ENCODE measurements at regions of chr1 and their contacts with region 1.

Region 1: GRCh38 chr1:197180252-197180878 is 33.9 kb upstream of the ASPM start:
- DNase-seq: peak; percentile 9
- CTCF ChIP-seq: peak; percentile 46

Region 2: GRCh38 chr1:197130677-197131304 is 49.6 kb before region 1 on chr1:
- CTCF ChIA-PET with region 1: interaction called, 12 read pairs
- POLR2A ChIA-PET with region 1: no interaction called
- DNase-seq: no peak
- CTCF ChIP-seq: no peak

Region 3: DNA sequence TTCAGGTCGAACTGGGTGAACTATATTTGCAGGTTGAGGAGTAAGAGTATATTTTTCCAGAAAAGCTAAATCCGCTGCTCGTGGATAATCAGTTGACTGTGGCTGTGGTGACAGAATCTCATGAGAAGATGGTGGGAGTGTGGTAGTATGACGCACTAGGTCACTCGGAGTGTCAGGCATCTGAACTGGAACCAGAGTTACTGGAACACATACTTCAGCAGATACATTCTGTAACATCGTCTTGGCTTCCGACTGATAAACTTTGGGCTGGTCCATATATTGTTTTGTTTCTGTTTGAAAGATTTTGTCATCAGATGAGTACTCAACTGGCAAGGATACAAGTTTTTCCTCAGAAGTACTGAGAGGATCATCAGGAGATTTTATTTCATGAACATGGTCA is 20.9 kb before region 1 on chr1:
- CTCF ChIA-PET with region 1: interaction called, 17 read pairs
- POLR2A ChIA-PET with region 1: no interaction called
- DNase-seq: no peak
- CTCF ChIP-seq: no peak

Region 4: GRCh38 chr1:197210426-197210825 is 30.1 kb after region 1 on chr1:
- CTCF ChIA-PET with region 1: no interaction called
- POLR2A ChIA-PET with region 1: no interaction called
- DNase-seq: no peak
- CTCF ChIP-seq: no peak

Region 5: GRCh38 chr1:197264936-197265567 is 84.7 kb after region 1 on chr1:
- CTCF ChIA-PET with region 1: no interaction called
- POLR2A ChIA-PET with region 1: no interaction called
- DNase-seq: no peak
- CTCF ChIP-seq: no peak

Region 6: GRCh38 chr1:197330213-197330612 is 149.8 kb after region 1 on chr1:
- CTCF ChIA-PET with region 1: interaction called, 14 read pairs
- POLR2A ChIA-PET with region 1: no interaction called
- DNase-seq: no peak
- CTCF ChIP-seq: no peak

Region 7: GRCh38 chr1:197336571-197336970 is 156.2 kb after region 1 on chr1:
- CTCF ChIA-PET with region 1: interaction called, 14 read pairs
- POLR2A ChIA-PET with region 1: no interaction called
- DNase-seq: no peak
- CTCF ChIP-seq: no peak

Region 8: GRCh38 chr1:197356723-197357533 is 176.6 kb after region 1 on chr1:
- CTCF ChIA-PET with region 1: interaction called, 42 read pairs
- POLR2A ChIA-PET with region 1: no interaction called
- DNase-seq: peak; percentile 26
- CTCF ChIP-seq: peak; percentile 62